Ascending aorta (tissue), 2 donors: ENCODE measurements at regions of chr14 and their contacts with region 1.

Region 1: DNA sequence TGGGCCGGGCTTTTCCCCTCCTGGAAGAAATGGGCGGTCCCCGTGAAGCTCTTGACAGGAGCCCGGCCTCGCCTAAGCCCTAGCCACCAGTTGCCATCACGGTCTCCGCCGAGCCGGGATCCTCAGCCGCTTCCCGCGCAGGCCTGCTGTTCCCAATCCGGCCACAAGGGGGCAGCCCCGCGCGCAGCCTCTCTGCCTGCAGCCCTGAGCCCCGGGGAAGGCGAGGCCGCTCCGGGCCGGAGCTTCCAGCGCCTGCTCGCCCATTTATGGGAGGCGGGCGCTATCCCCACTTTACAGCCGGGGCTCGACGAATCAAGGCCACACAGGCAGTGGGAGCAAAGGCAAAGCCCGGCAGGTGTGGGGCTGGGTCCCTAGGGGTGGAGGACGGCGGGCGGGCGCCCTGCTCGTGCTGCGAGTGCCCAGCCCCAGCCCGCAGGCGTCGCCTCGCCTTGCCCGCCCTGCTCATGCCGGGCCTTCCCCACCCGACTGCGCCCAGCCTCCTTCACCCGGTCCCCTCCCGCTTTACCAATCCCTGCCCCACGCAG is 61.5 kb downstream of the LGMN start:
- DNase-seq: peak in 1 of 2 donors; percentile 86
- H3K4me3 ChIP-seq: peak overlapping the region; percentile 50 to 64
- H3K27ac ChIP-seq: no peak overlapping the region
- H3K4me1 ChIP-seq: peaks cover 4% of the 10 kb centered on the region in 2 donors
- H3K27me3 ChIP-seq: no peaks in the 10 kb centered on the region
- CTCF ChIP-seq: peak; percentile 98 to 100 (median 100)

Region 2: GRCh38 chr14:92748259-92749016 is 61.5 kb after region 1 on chr14 and contains the start of gene LGMN:
- intact Hi-C with region 1: loop called (anchors 2 kb)
- DNase-seq: peak; percentile 86 to 98
- H3K4me3 ChIP-seq: peak within 1 kb of the TSS; percentile 81 to 84
- H3K27ac ChIP-seq: peak within 1 kb of the TSS; percentile 88 to 93
- H3K4me1 ChIP-seq: peaks cover 0 to 7% of the 10 kb centered on the region in 2 donors
- H3K27me3 ChIP-seq: no peaks in the 10 kb centered on the region
- CTCF ChIP-seq: no peak
- total RNA-seq, gene LGMN: 76.7 TPM

Region 3: DNA sequence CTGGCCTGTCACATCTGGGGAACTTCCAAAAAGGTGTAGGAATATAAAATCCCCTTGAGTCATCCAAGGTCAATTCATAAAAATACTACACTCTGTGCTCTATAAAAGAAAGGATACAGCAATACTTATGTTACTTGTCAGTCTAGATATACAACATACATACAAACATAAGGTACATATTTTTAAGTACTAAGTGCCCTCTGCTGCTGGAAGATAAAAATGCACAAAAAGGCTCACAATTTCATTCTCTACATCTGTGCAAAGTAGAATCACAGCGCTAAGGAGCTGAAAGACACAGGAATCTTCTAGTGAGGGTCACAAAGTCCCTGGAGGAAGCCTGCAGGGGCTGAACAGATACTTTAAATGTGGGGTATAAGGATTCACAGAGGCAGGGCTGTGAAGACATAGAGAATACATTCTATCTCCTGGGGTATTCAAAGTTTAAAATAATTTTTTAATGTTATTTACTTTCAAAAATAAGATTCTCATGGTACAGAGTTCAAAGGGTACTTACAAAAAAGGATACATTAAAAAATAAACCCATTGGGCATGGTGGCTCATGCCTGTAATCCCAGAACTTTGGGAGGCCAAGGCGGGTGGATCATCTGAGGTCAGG is 97.0 kb after region 1 on chr14:
- intact Hi-C with region 1: loop called (anchors 1 kb)
- DNase-seq: no peak
- H3K4me3 ChIP-seq: no peak overlapping the region
- H3K27ac ChIP-seq: no peak overlapping the region
- H3K4me1 ChIP-seq: peaks cover 0 to 2% of the 10 kb centered on the region in 2 donors
- H3K27me3 ChIP-seq: no peaks in the 10 kb centered on the region
- CTCF ChIP-seq: peak; percentile 36 to 66 (median 53)